ENCODE measurements at regions of chr6 and their contacts with region 1.

Region 1: GRCh38 chr6:109059571-109060021 is 35.0 kb downstream of the SESN1 start:
- DNase-seq: no peak
- ATAC-seq: peak; percentile 62
- H3K4me3 Mint-ChIP-seq: no peak overlapping the region
- H3K27ac Mint-ChIP-seq: no peak overlapping the region
- H3K4me1 Mint-ChIP-seq: peaks cover 18% of the 10 kb centered on the region
- H3K27me3 Mint-ChIP-seq: no peaks in the 10 kb centered on the region
- CTCF ChIP-seq: no peak

Region 2: DNA sequence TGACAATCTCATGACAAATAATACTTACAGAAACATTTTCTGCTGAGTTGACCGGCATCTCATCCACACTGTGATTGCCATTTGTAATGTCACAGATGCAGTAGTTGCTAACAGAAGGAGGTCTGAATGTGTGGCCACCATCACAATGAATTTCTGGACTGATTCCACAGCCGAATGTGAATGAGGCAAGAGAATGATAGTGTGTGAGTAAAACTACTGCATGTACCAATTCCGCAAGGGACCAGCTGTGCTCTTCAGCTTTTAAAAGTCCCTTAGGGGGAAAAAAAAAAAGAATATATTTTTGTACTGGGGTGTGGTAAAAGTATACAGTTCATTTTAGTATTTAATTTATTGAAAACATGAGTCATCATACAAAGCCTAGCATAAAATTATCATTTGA is 61.1 kb before region 1 on chr6:
- CTCF ChIA-PET with region 1: no interaction called
- POLR2A ChIA-PET with region 1: no interaction called
- intact Hi-C with region 1: no loop called
- DNase-seq: no peak
- ATAC-seq: no peak
- H3K4me3 Mint-ChIP-seq: no peak overlapping the region
- H3K27ac Mint-ChIP-seq: no peak overlapping the region
- H3K4me1 Mint-ChIP-seq: peaks cover 2% of the 10 kb centered on the region
- H3K27me3 Mint-ChIP-seq: no peaks in the 10 kb centered on the region
- CTCF ChIP-seq: no peak

Region 3: DNA sequence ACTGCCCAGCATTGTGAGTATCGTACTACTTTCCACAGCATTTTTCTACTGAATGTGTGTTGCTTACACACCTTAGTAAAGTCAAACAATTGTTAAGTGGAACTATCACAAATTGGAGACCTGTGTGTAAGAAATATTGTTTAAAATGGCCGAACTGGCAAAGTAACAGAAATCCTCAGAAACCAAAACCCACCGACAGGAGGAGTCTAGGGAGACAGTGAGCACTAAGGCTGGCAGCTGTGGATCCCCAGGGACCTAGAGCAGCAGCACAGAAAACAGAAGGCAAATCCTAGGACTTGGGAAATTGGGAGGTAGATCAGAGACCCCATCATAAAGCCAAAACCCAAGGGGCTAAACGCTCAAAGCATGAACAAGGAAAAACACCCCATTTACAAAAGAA is 34.8 kb before region 1 on chr6:
- CTCF ChIA-PET with region 1: no interaction called
- POLR2A ChIA-PET with region 1: no interaction called
- intact Hi-C with region 1: loop called (anchors 5 kb)
- DNase-seq: no peak
- ATAC-seq: no peak
- H3K4me3 Mint-ChIP-seq: no peak overlapping the region
- H3K27ac Mint-ChIP-seq: no peak overlapping the region
- H3K4me1 Mint-ChIP-seq: peaks cover 39% of the 10 kb centered on the region
- H3K27me3 Mint-ChIP-seq: no peaks in the 10 kb centered on the region
- CTCF ChIP-seq: no peak

Region 4: GRCh38 chr6:109139109-109139508 is 79.5 kb after region 1 on chr6:
- CTCF ChIA-PET with region 1: no interaction called
- POLR2A ChIA-PET with region 1: no interaction called
- intact Hi-C with region 1: no loop called
- DNase-seq: no peak
- ATAC-seq: no peak
- H3K4me3 Mint-ChIP-seq: no peak overlapping the region
- H3K27ac Mint-ChIP-seq: no peak overlapping the region
- H3K4me1 Mint-ChIP-seq: no peaks in the 10 kb centered on the region
- H3K27me3 Mint-ChIP-seq: no peaks in the 10 kb centered on the region
- CTCF ChIP-seq: no peak

Region 5: GRCh38 chr6:109153752-109154151 is 94.2 kb after region 1 on chr6:
- CTCF ChIA-PET with region 1: no interaction called
- POLR2A ChIA-PET with region 1: no interaction called
- intact Hi-C with region 1: no loop called
- DNase-seq: no peak
- ATAC-seq: no peak
- H3K4me3 Mint-ChIP-seq: no peak overlapping the region
- H3K27ac Mint-ChIP-seq: no peak overlapping the region
- H3K4me1 Mint-ChIP-seq: no peaks in the 10 kb centered on the region
- H3K27me3 Mint-ChIP-seq: no peaks in the 10 kb centered on the region
- CTCF ChIP-seq: no peak